BJ (cell line): ENCODE measurements at regions of chr21 and their contacts with region 1.

Region 1: DNA sequence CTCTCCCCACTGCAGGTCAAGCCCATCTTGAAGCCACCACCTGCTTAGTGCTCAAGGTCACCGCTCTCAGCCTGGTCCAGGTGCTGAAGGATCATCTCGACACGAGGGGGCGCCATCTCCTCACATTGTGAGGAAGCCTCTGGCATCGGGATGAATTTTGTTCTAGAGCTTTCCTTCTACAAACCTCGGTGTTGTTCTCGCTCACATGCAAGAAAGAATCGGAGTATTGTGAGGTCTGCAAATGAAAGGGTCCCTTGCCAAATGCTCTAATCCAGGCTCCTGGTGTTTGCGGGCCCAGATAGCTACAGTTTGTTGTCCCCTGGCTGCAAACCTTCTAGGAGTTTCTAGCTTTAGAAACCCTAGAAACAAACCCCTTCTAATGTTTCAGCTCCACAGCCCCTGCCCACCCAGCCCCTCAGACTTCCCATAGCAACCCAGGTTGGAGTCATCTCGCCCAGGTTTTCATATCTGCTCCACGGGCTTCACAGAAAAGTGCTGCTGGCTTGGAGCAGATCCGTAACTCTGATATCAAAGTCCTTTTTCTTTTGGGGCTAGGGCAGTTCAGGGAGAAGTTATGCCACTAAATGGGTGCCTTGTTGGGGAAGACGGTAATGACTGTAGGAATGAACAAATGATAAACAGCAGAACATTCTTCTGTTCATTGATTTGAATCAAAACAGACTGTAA is 8.6 kb upstream of the ATP5PO start:
- DNase-seq: no peak
- H3K4me3 ChIP-seq: no peak overlapping the region
- H3K27me3 ChIP-seq: no peaks in the 10 kb centered on the region
- CTCF ChIP-seq: peak; percentile 86

Region 2: DNA sequence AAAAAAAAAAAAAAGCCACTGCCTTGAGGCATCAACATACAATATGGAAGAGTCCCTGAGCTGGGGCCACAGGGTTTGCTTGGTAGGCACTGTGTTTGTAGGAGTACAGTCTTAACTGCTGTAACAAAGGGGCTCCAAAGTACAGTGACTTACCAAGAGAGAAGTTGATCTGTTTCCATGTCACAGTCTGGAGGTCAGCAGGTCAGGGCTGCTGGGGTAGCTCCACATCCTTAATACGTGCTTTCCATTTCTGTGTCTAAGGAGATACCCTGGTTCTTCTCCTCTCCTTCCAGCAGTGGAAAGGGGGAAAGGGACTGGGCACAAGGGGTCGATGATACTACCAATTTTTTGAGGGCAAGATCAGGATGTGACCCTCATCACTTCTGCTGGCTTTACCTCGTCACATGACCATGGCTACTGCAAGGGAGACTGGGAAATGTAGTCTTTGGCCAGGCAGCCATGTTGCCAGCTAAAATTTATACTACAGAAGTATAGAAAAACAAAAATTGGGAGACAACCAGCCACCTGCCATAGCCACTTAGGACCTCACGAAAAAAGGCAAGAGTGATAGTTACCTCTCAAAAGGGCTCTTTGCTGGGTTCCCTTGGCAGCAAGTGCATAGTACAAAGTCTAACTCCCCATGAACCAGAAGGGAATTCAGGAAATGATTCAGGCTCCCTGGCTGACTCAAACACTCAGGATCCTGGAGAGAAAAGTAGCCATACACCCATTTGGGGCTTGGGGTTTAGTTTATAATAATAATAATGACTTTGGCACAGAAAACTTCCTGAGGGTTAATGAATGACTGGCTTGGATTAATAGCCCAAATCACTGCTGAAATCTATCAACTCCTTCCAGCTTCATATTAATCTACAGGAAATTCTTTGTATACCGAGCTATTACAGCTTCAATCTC is 44.1 kb after region 1 on chr21:
- CTCF ChIA-PET with region 1: interaction called, 14 read pairs
- POLR2A ChIA-PET with region 1: no interaction called
- DNase-seq: peak; percentile 62
- H3K4me3 ChIP-seq: no peak overlapping the region
- H3K27me3 ChIP-seq: no peaks in the 10 kb centered on the region
- CTCF ChIP-seq: no peak

Region 3: GRCh38 chr21:34078915-34079314 is 154.7 kb after region 1 on chr21:
- CTCF ChIA-PET with region 1: interaction called, 24 read pairs
- POLR2A ChIA-PET with region 1: no interaction called
- DNase-seq: no peak
- H3K4me3 ChIP-seq: no peak overlapping the region
- H3K27me3 ChIP-seq: no peaks in the 10 kb centered on the region
- CTCF ChIP-seq: no peak

Region 4: DNA sequence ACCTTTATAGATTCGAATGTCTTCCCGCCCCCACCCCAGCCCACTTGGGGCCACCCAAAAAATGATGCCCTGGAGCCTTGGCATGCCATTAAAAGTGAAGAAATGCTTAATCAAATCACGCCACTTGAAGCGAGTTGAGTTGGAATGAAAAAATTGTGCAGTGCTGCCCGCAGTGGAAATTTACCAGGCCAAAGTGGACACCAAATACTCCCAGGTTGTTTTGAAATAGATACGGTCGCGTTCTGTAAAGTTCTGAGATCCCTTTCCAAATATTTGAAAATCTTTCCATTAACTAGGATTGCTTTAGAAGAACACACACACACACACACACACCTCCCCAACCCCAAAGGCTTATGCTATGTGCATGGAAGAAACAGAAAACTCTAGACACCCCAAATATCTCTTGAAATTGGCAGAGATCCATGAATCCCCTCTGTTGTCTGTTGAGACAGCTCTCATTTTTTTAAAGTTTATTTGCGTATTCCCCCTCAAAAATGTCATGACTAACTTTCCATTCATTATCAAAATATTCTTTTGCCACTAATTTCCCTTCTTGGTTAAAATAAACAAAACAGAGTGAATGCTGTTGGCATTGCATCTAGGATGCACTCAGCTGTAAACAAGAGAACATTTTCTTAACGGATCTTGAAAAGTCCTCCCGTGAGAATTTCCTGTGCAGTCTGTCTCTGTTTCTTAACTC is 297.3 kb after region 1 on chr21:
- CTCF ChIA-PET with region 1: no interaction called
- POLR2A ChIA-PET with region 1: no interaction called
- DNase-seq: no peak
- H3K4me3 ChIP-seq: no peak overlapping the region
- H3K27me3 ChIP-seq: peaks cover 2% of the 10 kb centered on the region
- CTCF ChIP-seq: no peak

Region 5: DNA sequence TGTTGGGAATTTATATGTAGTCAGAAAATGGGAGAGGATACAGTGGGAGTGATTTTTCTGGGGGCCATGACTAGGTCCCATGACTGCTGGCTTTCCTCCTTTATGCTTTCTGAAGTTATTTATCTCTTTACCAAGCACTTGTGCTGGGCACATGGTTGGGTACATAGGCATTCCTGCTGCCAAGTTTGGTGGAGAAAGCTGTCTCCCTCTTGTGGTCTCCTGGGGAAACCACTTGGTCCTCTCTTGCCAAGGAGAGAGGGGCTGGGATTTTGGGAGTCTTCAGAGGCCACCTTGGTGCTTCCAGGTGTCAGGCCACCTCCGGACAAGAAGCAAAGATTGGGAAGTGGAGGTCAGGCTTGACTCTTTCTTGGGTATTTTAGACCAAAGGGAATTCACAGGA is 319.3 kb after region 1 on chr21:
- CTCF ChIA-PET with region 1: interaction called, 29 read pairs
- POLR2A ChIA-PET with region 1: no interaction called
- DNase-seq: no peak
- H3K4me3 ChIP-seq: no peak overlapping the region
- H3K27me3 ChIP-seq: peaks cover 3% of the 10 kb centered on the region; the same call in 1 of the 2 replicates
- CTCF ChIP-seq: peak; percentile 61

Region 6: GRCh38 chr21:34336756-34337391 is 412.7 kb after region 1 on chr21:
- CTCF ChIA-PET with region 1: interaction called, 278 read pairs
- POLR2A ChIA-PET with region 1: no interaction called
- DNase-seq: peak; percentile 26
- H3K4me3 ChIP-seq: no peak overlapping the region
- H3K27me3 ChIP-seq: no peaks in the 10 kb centered on the region
- CTCF ChIP-seq: no peak

Region 7: GRCh38 chr21:34362136-34362444 is 437.9 kb after region 1 on chr21:
- CTCF ChIA-PET with region 1: interaction called, 278 read pairs
- POLR2A ChIA-PET with region 1: no interaction called
- DNase-seq: no peak
- H3K4me3 ChIP-seq: no peak overlapping the region
- H3K27me3 ChIP-seq: no peaks in the 10 kb centered on the region
- CTCF ChIP-seq: no peak